H1 (cell line): ENCODE measurements at regions of chr12 and their contacts with region 1.

Region 1: DNA sequence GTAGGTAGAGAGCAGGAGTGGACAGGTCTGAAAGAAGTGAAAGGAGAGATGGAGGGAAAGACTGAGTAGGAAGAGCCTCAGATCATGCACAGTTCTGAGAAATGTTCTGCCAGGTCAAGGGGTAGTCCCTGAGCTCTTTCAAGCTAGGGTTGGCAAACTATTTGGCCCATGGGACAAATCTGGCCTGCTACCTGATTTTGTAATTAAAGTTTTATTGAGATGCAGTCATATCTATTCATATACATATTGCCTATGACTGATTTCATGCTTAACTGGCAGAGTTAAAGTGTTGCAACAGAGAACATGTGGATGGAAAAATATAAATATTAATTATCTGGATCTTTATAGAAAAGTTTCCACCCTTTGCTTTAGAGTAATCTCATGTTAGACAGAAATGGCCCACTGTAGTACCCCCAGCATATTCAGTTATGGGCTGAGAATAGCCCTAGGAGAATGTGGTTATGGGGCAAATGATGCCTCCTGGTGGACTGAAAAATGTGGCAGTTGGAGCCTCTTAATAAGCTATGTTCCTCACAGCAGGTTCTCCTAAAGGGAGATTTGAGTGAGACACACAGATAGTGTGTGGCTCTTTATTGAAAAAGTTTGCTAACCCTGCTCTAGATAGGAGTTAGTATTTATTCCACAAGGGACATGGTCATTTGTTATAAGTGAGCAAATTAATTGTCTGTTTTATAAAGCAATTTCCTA is 476.9 kb downstream of the LRIG3 start:
- DNase-seq: peak in 1 of 2 experiments; percentile 52
- H3K4me3 ChIP-seq: no peak overlapping the region
- H3K27ac ChIP-seq: no peak overlapping the region
- H3K4me1 ChIP-seq: 0 out of 7 replicates have a peak, but pooled peaks cover 0 to 2% (median 0%) of the 10 kb centered on the region in 4 experiments
- H3K27me3 ChIP-seq: no peaks in the 10 kb centered on the region
- CTCF ChIP-seq: peak in 2 of 3 experiments; percentile 72 to 76; a peak in 3 of 4 replicates
- EP300 ChIP-seq: no peak
- POLR2A ChIP-seq: no peak
- RAD21 ChIP-seq: peak; percentile 74 to 80

Region 2: GRCh38 chr12:58346032-58346632 is 97.3 kb before region 1 on chr12:
- CTCF ChIA-PET with region 1: interaction called, 15 read pairs
- POLR2A ChIA-PET with region 1: no interaction called
- DNase-seq: no peak
- H3K4me3 ChIP-seq: no peak overlapping the region
- H3K27ac ChIP-seq: no peak overlapping the region
- H3K4me1 ChIP-seq: no peaks in the 10 kb centered on the region
- H3K27me3 ChIP-seq: no peaks in the 10 kb centered on the region
- CTCF ChIP-seq: peak in 2 of 3 experiments; percentile 53 to 61; a peak in 2 of 4 replicates
- EP300 ChIP-seq: no peak
- POLR2A ChIP-seq: no peak
- RAD21 ChIP-seq: peak; percentile 84 to 88

Region 3: DNA sequence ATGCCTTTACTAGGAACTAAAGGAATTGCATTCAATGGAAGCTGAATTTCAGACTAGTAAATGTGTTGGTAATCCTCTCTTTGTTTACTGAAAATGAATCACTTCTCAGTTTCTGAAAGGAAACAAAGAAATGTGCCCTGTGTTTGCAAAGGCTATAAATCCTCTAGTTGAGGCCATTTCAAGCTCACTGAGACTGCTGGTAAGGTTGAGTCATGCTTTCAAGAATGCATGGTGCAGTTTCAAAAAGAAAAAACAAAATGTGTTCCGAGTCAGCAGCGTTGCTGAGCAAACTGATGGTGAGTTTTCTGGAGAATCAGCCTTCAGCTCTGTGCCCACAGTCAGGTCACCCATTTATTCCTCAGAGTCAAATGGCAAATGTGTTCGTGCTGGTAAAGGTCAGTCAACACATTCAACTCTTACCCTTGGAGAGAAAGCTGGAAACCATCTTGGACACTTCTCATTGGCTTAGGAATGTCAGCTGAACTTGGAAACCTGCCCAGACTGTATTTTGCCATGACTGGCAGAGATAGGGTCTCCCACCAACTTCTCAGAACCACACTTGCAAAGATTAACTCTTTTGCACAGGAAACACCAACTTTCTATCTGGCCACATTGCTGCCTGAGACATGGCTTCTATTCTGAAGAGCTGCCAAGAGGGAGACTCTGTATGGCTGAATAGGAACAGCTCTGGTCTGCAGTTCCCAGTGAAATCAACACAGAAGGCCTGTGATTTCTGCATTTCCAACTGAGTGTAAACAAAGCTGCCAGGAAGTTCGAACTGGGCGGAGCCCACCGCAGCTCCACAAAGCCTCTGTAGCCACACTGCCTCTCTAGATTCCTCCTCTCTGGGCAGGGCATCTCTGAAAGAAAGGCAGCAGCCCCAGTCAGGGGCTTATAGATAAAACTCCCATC is 17.7 kb before region 1 on chr12:
- CTCF ChIA-PET with region 1: interaction called, 36 read pairs
- POLR2A ChIA-PET with region 1: no interaction called
- DNase-seq: no peak
- H3K4me3 ChIP-seq: peak overlapping the region in 2 of 4 experiments; percentile 21 to 23; a peak in 3 of 8 replicates
- H3K27ac ChIP-seq: peak overlapping the region; percentile 69
- H3K4me1 ChIP-seq: peaks cover 0 to 21% (median 7%) of the 10 kb centered on the region in 4 experiments; a peak in 5 of 7 replicates
- H3K27me3 ChIP-seq: no peaks in the 10 kb centered on the region
- CTCF ChIP-seq: no peak
- EP300 ChIP-seq: no peak
- POLR2A ChIP-seq: no peak
- RAD21 ChIP-seq: no peak